ENCODE measurements at regions of chr20 and their contacts with region 1.

Region 1: GRCh38 chr20:45771182-45771759 is 20.4 kb downstream of the WFDC3 start:
- DNase-seq: peak; percentile 80 to 91
- H3K4me3 ChIP-seq: no peak overlapping the region
- H3K27ac ChIP-seq: no peak overlapping the region
- H3K4me1 ChIP-seq: peaks cover 2 to 7% (median 5%) of the 10 kb centered on the region in 4 experiments
- H3K27me3 ChIP-seq: no peaks in the 10 kb centered on the region
- CTCF ChIP-seq: peak; percentile 61 to 94 (median 93)
- EP300 ChIP-seq: no peak
- POLR2A ChIP-seq: no peak
- RAD21 ChIP-seq: peak; percentile 99

Region 2: DNA sequence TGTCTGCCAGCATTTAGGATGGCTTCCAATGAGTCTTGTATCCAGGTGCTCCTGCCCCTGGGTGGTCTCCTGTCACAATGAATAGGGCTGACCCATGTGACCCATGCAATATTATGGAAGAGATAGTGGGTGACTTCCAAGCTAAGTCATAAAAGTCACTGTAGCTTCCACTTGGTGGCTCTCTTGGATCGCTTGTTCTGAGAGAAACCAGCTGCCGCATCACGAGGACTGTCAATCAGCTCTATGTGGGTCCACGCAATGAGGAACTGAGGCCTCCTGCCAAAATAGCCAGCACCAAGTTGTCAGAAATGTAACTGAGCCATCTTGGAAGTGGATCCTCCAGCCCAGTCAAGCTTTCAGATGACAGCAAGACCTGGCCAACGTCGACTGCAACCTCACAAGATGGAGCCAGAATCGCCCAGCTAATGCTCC is 448.3 kb before region 1 on chr20:
- CTCF ChIA-PET with region 1: interaction called, 33 read pairs
- POLR2A ChIA-PET with region 1: no interaction called
- DNase-seq: no peak
- H3K4me3 ChIP-seq: no peak overlapping the region
- H3K27ac ChIP-seq: no peak overlapping the region
- H3K4me1 ChIP-seq: no peaks in the 10 kb centered on the region; a peak in 1 of 7 replicates
- H3K27me3 ChIP-seq: no peaks in the 10 kb centered on the region
- CTCF ChIP-seq: peak in 2 of 3 experiments; percentile 42 to 54; a peak in 3 of 4 replicates
- EP300 ChIP-seq: no peak
- POLR2A ChIP-seq: no peak
- RAD21 ChIP-seq: peak; percentile 73 to 82

Region 3: GRCh38 chr20:45456632-45457031 is 314.6 kb before region 1 on chr20:
- CTCF ChIA-PET with region 1: interaction called, 67 read pairs
- POLR2A ChIA-PET with region 1: no interaction called
- DNase-seq: peak in 1 of 2 experiments; percentile 73
- H3K4me3 ChIP-seq: no peak overlapping the region
- H3K27ac ChIP-seq: no peak overlapping the region
- H3K4me1 ChIP-seq: no peaks in the 10 kb centered on the region; a peak in 1 of 7 replicates
- H3K27me3 ChIP-seq: no peaks in the 10 kb centered on the region
- CTCF ChIP-seq: peak; percentile 58 to 76 (median 63)
- EP300 ChIP-seq: no peak
- POLR2A ChIP-seq: no peak
- RAD21 ChIP-seq: peak; percentile 50 to 64

Region 4: DNA sequence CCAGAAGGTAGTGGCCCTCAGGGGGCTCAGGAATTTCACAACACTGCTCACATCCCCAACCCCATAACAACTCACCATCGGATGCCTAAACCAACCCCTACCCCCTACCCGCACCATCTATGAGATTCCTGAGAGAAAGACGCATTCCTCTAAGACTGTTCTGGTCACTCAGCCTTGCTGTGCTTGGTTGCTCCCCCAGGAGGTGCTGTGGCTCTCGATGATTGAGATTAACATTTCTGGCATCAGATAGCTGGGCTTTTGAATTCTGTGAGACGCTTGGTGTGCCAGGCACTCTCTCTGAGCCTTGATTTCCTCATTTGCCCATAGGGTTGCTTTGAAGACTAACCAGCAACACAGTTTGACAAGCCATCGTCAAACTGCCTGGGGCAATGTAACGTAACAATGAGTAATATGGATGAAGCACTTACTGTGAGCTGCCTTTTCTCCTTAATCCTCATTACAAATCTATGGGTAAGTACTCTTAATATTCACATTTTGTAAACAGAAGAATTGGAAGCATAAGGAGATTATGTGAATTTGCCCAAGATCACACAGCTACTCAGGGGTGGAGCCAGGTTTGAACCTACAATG is 233.0 kb before region 1 on chr20:
- CTCF ChIA-PET with region 1: interaction called, 42 read pairs
- POLR2A ChIA-PET with region 1: interaction called, 4 read pairs
- DNase-seq: peak in 1 of 2 experiments; percentile 65
- H3K4me3 ChIP-seq: no peak overlapping the region
- H3K27ac ChIP-seq: no peak overlapping the region
- H3K4me1 ChIP-seq: no peaks in the 10 kb centered on the region
- H3K27me3 ChIP-seq: no peaks in the 10 kb centered on the region
- CTCF ChIP-seq: peak; percentile 43 to 75 (median 52)
- EP300 ChIP-seq: no peak
- POLR2A ChIP-seq: no peak
- RAD21 ChIP-seq: peak; percentile 29 to 47; a peak in 2 of 4 replicates

Region 5: DNA sequence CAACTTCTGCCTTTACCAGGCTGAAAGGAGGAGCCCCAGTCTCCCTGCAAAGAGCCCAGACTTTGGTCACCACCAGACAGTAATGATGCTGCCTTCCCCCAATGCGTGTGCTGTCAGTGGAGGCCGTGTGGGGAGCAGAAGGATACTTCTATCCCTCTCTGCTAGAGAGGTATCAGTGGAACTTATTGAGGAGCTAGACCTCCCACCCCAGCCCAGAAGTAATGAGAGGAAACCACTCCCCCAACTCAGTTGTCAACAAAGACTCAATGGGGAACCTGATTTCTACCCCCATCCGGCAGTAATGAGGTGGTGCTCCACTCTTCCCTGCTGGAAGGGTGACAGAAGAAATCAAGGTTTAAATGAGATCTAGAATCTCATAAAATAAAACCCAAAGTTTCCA is 187.8 kb before region 1 on chr20:
- CTCF ChIA-PET with region 1: interaction called, 30 read pairs
- POLR2A ChIA-PET with region 1: interaction called, 3 read pairs
- DNase-seq: no peak
- H3K4me3 ChIP-seq: peak overlapping the region in 1 of 4 experiments; percentile 17; a peak in 2 of 8 replicates
- H3K27ac ChIP-seq: no peak overlapping the region
- H3K4me1 ChIP-seq: peaks cover 3 to 7% (median 5%) of the 10 kb centered on the region in 4 experiments; a peak in 5 of 7 replicates
- H3K27me3 ChIP-seq: no peaks in the 10 kb centered on the region
- CTCF ChIP-seq: no peak
- EP300 ChIP-seq: no peak
- POLR2A ChIP-seq: no peak
- RAD21 ChIP-seq: no peak

Region 6: DNA sequence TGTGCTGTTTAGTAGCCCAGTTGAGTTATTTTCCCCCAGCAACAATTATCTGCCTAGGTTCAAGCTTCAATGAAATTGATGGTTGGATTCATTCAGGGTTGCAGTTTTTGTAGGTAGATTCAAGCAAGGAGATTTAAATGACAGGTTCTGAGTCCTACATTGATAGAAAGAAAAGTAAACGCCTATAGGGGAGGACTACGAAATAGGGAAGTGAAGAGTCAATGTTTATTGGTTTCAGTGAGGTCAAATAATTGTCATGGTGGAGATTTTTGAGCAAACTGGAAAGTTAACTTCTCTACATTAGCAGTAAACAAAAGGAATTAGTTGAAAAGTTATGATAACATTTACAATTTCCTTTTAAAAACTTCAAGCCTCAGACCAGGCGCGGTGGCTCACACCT is 70.2 kb before region 1 on chr20:
- CTCF ChIA-PET with region 1: no interaction called
- POLR2A ChIA-PET with region 1: no interaction called
- DNase-seq: no peak
- H3K4me3 ChIP-seq: no peak overlapping the region
- H3K27ac ChIP-seq: no peak overlapping the region
- H3K4me1 ChIP-seq: no peaks in the 10 kb centered on the region
- H3K27me3 ChIP-seq: no peaks in the 10 kb centered on the region; a peak in 1 of 7 replicates
- CTCF ChIP-seq: no peak
- EP300 ChIP-seq: no peak
- POLR2A ChIP-seq: no peak
- RAD21 ChIP-seq: no peak

Region 7: GRCh38 chr20:45751721-45752120 is 19.6 kb before region 1 on chr20:
- CTCF ChIA-PET with region 1: interaction called, 10 read pairs
- POLR2A ChIA-PET with region 1: interaction called, 3 read pairs
- DNase-seq: no peak
- H3K4me3 ChIP-seq: no peak overlapping the region
- H3K27ac ChIP-seq: no peak overlapping the region
- H3K4me1 ChIP-seq: no peaks in the 10 kb centered on the region
- H3K27me3 ChIP-seq: no peaks in the 10 kb centered on the region
- CTCF ChIP-seq: no peak
- EP300 ChIP-seq: no peak
- POLR2A ChIP-seq: no peak
- RAD21 ChIP-seq: no peak

Measured in H1 (cell line).